MCF 10A (cell line): ENCODE measurements at regions of chr12 and their contacts with region 1.

Region 1: GRCh38 chr12:15796493-15797141 is 7.4 kb upstream of the EPS8 start:
- DNase-seq: peak; percentile 57
- H3K4me3 Mint-ChIP-seq: no peak overlapping the region
- H3K27ac Mint-ChIP-seq: no peak overlapping the region
- H3K4me1 Mint-ChIP-seq: peaks cover 21% of the 10 kb centered on the region
- H3K27me3 Mint-ChIP-seq: no peaks in the 10 kb centered on the region
- CTCF ChIP-seq: no peak

Region 2: DNA sequence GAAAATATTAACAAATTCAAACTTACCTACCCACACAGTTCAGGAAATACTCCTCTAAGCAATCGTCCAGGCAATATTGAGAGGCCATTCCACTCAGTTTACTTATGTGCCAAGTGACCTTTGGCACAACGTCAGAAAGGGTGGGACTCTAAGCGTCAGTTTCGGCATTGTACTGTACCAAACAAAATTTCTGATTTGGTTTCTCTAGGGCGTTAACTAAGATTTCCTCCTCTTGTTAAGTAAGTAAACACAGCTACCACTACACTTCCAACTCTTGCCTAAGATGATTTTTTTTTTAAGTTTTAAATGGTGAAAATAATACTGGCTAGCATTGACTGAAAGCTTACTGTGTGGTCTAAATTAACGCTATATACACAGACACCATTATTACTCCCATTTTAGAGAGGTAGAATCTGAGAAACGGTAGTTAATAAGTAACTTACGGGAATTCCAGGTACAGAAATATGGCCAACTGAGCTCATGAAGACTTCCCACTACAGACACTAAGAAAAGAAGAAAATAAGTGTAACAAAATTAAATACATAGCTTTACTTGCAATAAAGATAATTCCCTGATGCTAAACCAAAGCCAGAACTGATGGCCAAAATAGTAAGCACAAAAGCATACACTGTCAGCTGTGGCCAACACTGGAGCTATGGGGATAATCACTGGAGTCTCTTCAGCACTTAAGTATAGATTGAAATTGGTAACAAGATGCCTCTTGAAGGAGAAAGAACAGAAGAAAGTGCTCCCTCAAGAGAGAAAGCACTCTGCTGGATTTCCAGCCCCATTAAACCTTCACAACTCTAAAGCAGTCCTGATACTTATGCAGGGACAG is 83.6 kb before region 1 on chr12:
- CTCF ChIA-PET with region 1: no interaction called
- POLR2A ChIA-PET with region 1: no interaction called
- intact Hi-C with region 1: no loop called
- DNase-seq: no peak
- H3K4me3 Mint-ChIP-seq: no peak overlapping the region
- H3K27ac Mint-ChIP-seq: no peak overlapping the region
- H3K4me1 Mint-ChIP-seq: peaks cover 10% of the 10 kb centered on the region
- H3K27me3 Mint-ChIP-seq: no peaks in the 10 kb centered on the region
- CTCF ChIP-seq: no peak

Region 3: DNA sequence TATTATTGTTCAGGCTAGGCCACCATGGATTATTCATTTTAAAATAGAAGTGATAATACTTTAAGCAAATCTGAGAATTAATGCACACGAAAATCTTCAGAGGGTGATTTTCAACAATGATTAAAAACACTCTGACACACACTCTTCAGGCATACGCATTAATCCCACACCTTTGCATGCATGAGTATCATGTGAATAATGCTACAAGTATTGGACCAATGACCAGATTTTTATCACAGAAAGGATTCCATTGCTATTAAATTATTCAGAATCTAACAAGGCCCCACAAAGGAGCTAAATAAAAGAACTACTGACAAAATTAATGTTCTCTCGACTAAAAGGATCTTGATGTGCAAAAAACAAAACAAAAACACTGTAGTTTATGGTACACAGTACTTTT is 18.5 kb before region 1 on chr12:
- CTCF ChIA-PET with region 1: interaction called, 5 read pairs
- POLR2A ChIA-PET with region 1: interaction called, 15 read pairs
- intact Hi-C with region 1: no loop called
- DNase-seq: no peak
- H3K4me3 Mint-ChIP-seq: no peak overlapping the region
- H3K27ac Mint-ChIP-seq: peak overlapping the region; percentile 92
- H3K4me1 Mint-ChIP-seq: peaks cover 38% of the 10 kb centered on the region
- H3K27me3 Mint-ChIP-seq: no peaks in the 10 kb centered on the region
- CTCF ChIP-seq: no peak

Region 4: DNA sequence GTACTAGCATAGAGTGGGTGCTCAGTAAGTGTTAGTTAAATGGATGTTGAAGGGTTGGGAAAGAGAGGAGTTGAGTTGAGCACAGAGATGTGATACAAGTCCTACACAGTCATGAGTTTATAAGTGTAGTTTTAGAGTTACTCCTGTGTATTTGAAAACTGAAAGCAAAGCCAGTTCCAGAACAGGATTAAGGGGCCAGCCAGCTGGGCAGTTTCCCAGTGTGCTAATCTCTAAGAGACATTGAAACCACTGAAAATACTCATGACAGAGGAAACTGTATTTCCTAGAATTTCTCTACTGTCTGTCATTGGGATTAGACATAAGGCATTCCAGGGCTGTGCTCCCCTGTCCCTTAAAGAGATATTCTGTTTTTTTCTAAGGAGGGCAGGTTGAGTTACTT is 215.5 kb after region 1 on chr12:
- CTCF ChIA-PET with region 1: no interaction called
- POLR2A ChIA-PET with region 1: no interaction called
- intact Hi-C with region 1: no loop called
- DNase-seq: no peak
- H3K4me3 Mint-ChIP-seq: no peak overlapping the region
- H3K27ac Mint-ChIP-seq: no peak overlapping the region
- H3K4me1 Mint-ChIP-seq: no peaks in the 10 kb centered on the region
- H3K27me3 Mint-ChIP-seq: no peaks in the 10 kb centered on the region
- CTCF ChIP-seq: no peak

Region 5: GRCh38 chr12:17372508-17372907 is 1575.9 kb after region 1 on chr12:
- CTCF ChIA-PET with region 1: no interaction called
- POLR2A ChIA-PET with region 1: no interaction called
- intact Hi-C with region 1: no loop called
- DNase-seq: no peak
- H3K4me3 Mint-ChIP-seq: no peak overlapping the region
- H3K27ac Mint-ChIP-seq: no peak overlapping the region
- H3K4me1 Mint-ChIP-seq: no peaks in the 10 kb centered on the region
- H3K27me3 Mint-ChIP-seq: no peaks in the 10 kb centered on the region
- CTCF ChIP-seq: no peak